ENCODE measurements at regions of chr1 and their contacts with region 1.

Region 1: DNA sequence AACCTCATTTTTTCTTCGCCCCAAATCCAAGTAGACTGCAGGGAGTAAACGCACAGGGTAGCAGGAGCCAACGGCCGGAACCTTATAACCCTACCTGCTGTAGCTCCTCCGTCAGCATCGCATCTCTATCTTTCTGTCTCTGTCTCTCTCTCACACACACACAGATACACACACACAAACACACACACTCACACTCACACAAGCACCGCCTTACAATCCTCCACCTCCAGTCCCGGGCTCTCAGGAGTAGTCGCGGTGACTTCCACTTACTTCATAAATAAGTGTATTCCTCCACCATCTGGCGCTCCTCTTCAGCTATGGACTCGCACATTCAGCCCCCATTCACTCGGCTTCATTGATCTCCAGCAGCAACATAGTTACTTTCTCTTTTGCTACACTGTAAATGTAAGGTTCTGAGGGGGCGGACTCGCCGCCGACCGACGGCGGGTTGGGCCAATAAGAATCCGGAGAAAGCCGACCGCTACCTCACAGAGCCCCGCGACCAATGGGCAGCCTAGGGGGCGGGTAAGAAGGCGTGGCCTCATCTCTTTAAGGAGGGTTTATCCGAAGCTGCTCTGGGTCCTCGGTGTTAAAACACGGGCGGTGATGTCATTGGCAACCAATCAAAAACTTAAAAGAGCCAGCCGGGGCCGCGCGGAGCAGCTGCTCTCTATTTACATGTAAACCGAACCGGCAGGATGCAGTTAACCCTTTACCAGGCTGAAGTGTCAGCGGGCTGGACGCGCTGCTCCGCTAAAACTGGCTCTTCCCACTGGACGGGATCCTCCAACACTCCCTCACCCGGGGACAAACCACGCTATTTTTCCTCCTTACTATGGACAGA is at the start of gene DUSP10:
- DNase-seq: peak; percentile 99
- ATAC-seq: peak; percentile 90
- H3K4me3 Mint-ChIP-seq: no peak within 1 kb of the TSS
- H3K27ac Mint-ChIP-seq: no peak within 1 kb of the TSS
- H3K4me1 Mint-ChIP-seq: peaks cover 33% of the 10 kb centered on the region
- H3K27me3 Mint-ChIP-seq: no peaks in the 10 kb centered on the region
- total RNA-seq, gene DUSP10: 7.3 to 9.2 TPM

Region 2: GRCh38 chr1:220056374-220056773 is 1685.6 kb before region 1 on chr1:
- CTCF ChIA-PET with region 1: no interaction called
- POLR2A ChIA-PET with region 1: no interaction called
- intact Hi-C with region 1: no loop called
- DNase-seq: no peak
- ATAC-seq: no peak
- H3K4me3 Mint-ChIP-seq: no peak overlapping the region
- H3K27ac Mint-ChIP-seq: no peak overlapping the region
- H3K4me1 Mint-ChIP-seq: no peaks in the 10 kb centered on the region
- H3K27me3 Mint-ChIP-seq: no peaks in the 10 kb centered on the region

Region 3: GRCh38 chr1:221478050-221478949 is 263.6 kb before region 1 on chr1:
- CTCF ChIA-PET with region 1: no interaction called
- POLR2A ChIA-PET with region 1: no interaction called
- intact Hi-C with region 1: loop called (anchors 2 kb)
- DNase-seq: peak; percentile 78
- ATAC-seq: peak; percentile 99
- H3K4me3 Mint-ChIP-seq: no peak overlapping the region
- H3K27ac Mint-ChIP-seq: no peak overlapping the region
- H3K4me1 Mint-ChIP-seq: no peaks in the 10 kb centered on the region
- H3K27me3 Mint-ChIP-seq: peaks cover 7% of the 10 kb centered on the region

Region 4: GRCh38 chr1:221612264-221612777 is 129.6 kb before region 1 on chr1:
- CTCF ChIA-PET with region 1: no interaction called
- POLR2A ChIA-PET with region 1: no interaction called
- intact Hi-C with region 1: no loop called
- DNase-seq: no peak
- ATAC-seq: no peak
- H3K4me3 Mint-ChIP-seq: no peak overlapping the region
- H3K27ac Mint-ChIP-seq: no peak overlapping the region
- H3K4me1 Mint-ChIP-seq: peaks cover 3% of the 10 kb centered on the region
- H3K27me3 Mint-ChIP-seq: no peaks in the 10 kb centered on the region

Region 5: GRCh38 chr1:221725735-221726672 is 15.9 kb before region 1 on chr1:
- CTCF ChIA-PET with region 1: interaction called, 6 read pairs
- POLR2A ChIA-PET with region 1: interaction called, 4 read pairs
- intact Hi-C with region 1: loop called (anchors 1 kb)
- DNase-seq: no peak
- ATAC-seq: peak; percentile 86
- H3K4me3 Mint-ChIP-seq: peak overlapping the region; percentile 39
- H3K27ac Mint-ChIP-seq: peak overlapping the region; percentile 94
- H3K4me1 Mint-ChIP-seq: peaks cover 78% of the 10 kb centered on the region
- H3K27me3 Mint-ChIP-seq: no peaks in the 10 kb centered on the region

Region 6: DNA sequence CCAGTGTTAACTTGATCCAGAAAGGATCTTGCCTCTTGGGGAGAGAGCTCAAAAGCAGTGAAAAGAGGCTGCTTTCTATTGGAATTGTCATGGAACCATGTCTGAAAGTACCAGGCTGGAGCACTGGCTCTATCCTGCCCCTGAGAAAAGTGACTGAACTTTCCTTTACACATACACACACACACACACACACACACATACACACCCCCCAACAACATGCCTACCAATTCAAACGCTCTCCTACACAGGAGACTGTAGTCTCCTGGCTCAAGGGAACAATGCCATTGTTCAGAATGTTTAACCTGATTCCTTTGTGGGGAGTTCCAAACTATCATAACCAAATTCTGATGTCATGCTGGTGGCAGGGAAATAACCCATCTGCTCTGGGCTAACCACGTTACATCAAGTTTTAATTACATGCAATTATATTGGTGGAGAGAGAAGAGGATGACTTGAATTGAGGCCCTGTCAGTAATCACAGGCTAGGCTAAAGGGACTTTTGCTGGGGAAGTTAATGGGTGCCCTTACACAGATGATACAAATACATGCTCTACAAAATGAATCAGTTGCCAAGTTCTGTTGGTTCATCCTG is 52.2 kb after region 1 on chr1:
- CTCF ChIA-PET with region 1: interaction called, 4 read pairs
- POLR2A ChIA-PET with region 1: interaction called, 9 read pairs
- intact Hi-C with region 1: loop called (anchors 1 kb)
- DNase-seq: peak; percentile 54
- ATAC-seq: peak; percentile 91
- H3K4me3 Mint-ChIP-seq: no peak overlapping the region
- H3K27ac Mint-ChIP-seq: peak overlapping the region; percentile 89
- H3K4me1 Mint-ChIP-seq: peaks cover 34% of the 10 kb centered on the region
- H3K27me3 Mint-ChIP-seq: no peaks in the 10 kb centered on the region

Region 7: DNA sequence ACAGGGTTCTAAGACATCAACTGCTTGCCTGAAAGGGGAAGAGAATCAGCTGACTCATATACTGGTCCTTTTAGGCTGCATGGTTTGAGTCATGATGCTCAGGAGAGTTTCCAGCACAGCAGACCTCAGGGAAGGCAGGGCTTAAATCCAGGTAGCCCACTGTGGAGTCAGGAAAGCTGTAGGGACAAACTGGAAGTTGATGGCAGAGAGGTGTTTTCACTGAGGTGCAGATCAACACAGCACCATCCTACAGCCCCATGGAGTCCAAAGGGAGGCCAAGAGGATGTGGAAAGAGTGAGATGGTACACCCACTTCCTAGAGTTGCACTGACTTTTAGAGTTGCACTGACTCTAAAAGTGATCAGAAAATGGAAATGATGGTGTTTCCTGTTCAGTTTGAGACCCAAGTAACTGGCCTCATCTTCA is 252.4 kb after region 1 on chr1:
- CTCF ChIA-PET with region 1: no interaction called
- POLR2A ChIA-PET with region 1: no interaction called
- intact Hi-C with region 1: loop called in 1 of 2 experiments (anchors 1 kb)
- DNase-seq: peak; percentile 50
- ATAC-seq: peak; percentile 81
- H3K4me3 Mint-ChIP-seq: no peak overlapping the region
- H3K27ac Mint-ChIP-seq: peak overlapping the region; percentile 89
- H3K4me1 Mint-ChIP-seq: peaks cover 32% of the 10 kb centered on the region
- H3K27me3 Mint-ChIP-seq: no peaks in the 10 kb centered on the region

Region 8: GRCh38 chr1:222589462-222590302 is 847.7 kb after region 1 on chr1 and contains the start of gene TAF1A:
- CTCF ChIA-PET with region 1: no interaction called
- POLR2A ChIA-PET with region 1: no interaction called
- intact Hi-C with region 1: loop called in 1 of 2 experiments (anchors 5 kb)
- DNase-seq: peak; percentile 93
- ATAC-seq: peak; percentile 99
- H3K4me3 Mint-ChIP-seq: peak within 1 kb of the TSS; percentile 99
- H3K27ac Mint-ChIP-seq: peak within 1 kb of the TSS; percentile 99
- H3K4me1 Mint-ChIP-seq: peaks cover 36% of the 10 kb centered on the region
- H3K27me3 Mint-ChIP-seq: no peaks in the 10 kb centered on the region
- total RNA-seq, gene TAF1A: 18.5 to 21.1 TPM